ENCODE measurements at regions of chr3 and their contacts with region 1.

Region 1: GRCh38 chr3:13391308-13391707 is 28.8 kb downstream of the NUP210 start:
- DNase-seq: peak in 1 of 4 experiments; percentile 56
- ATAC-seq: peak; percentile 77
- H3K4me3 ChIP-seq: no peak overlapping the region
- H3K27ac ChIP-seq: no peak overlapping the region
- H3K4me1 ChIP-seq: peaks cover 0 to 3% of the 10 kb centered on the region in 2 experiments; a peak in 1 of 5 replicates
- H3K27me3 ChIP-seq: no peaks in the 10 kb centered on the region
- CTCF ChIP-seq: peak; percentile 12 to 66 (median 50); a peak in 5 of 6 replicates
- EP300 ChIP-seq: no peak
- POLR2A ChIP-seq: no peak
- RAD21 ChIP-seq: peak in 1 of 2 experiments; percentile 55; a peak in 2 of 4 replicates

Region 2: DNA sequence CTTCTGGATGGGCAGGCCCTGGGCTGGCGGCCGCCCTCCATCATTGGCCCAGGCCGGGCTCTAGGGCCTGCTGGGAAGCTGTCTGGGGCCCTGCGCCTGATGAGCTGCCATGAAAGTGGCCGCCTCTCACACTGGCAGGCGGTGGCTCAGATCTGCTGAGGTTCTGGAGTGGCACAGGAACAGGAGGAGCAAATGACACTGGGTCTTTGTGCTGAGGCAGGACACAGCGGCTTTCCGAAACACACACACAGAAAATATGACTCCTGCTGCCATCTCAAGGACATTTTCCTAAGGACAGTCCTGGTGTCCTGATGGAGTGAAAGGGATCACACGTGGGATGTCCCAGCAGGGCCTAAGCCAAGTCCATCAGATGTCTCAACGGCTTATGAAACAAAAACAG is 74.7 kb before region 1 on chr3:
- CTCF ChIA-PET with region 1: no interaction called
- POLR2A ChIA-PET with region 1: no interaction called
- in situ Hi-C with region 1: no loop called
- intact Hi-C with region 1: no loop called
- DNase-seq: no peak
- ATAC-seq: no peak
- H3K4me3 ChIP-seq: no peak overlapping the region
- H3K27ac ChIP-seq: no peak overlapping the region
- H3K4me1 ChIP-seq: peaks cover 0 to 2% of the 10 kb centered on the region in 2 experiments; a peak in 1 of 5 replicates
- H3K27me3 ChIP-seq: no peaks in the 10 kb centered on the region
- CTCF ChIP-seq: no peak
- EP300 ChIP-seq: no peak
- POLR2A ChIP-seq: no peak
- RAD21 ChIP-seq: no peak

Region 3: GRCh38 chr3:13379201-13379830 is 12.0 kb before region 1 on chr3:
- CTCF ChIA-PET with region 1: no interaction called
- POLR2A ChIA-PET with region 1: interaction called, 13 read pairs
- in situ Hi-C with region 1: no loop called
- intact Hi-C with region 1: no loop called
- DNase-seq: no peak
- ATAC-seq: no peak
- H3K4me3 ChIP-seq: no peak overlapping the region
- H3K27ac ChIP-seq: no peak overlapping the region
- H3K4me1 ChIP-seq: no peaks in the 10 kb centered on the region
- H3K27me3 ChIP-seq: no peaks in the 10 kb centered on the region
- CTCF ChIP-seq: no peak
- EP300 ChIP-seq: no peak
- POLR2A ChIP-seq: no peak
- RAD21 ChIP-seq: no peak

Measured in K562 (cell line).